Activated CD8-positive, alpha-beta T cell treated with anti-CD3 and anti-CD28 coated beads for 36 hours (primary cell): ENCODE measurements at regions of chr12 and their contacts with region 1.

Region 1: DNA sequence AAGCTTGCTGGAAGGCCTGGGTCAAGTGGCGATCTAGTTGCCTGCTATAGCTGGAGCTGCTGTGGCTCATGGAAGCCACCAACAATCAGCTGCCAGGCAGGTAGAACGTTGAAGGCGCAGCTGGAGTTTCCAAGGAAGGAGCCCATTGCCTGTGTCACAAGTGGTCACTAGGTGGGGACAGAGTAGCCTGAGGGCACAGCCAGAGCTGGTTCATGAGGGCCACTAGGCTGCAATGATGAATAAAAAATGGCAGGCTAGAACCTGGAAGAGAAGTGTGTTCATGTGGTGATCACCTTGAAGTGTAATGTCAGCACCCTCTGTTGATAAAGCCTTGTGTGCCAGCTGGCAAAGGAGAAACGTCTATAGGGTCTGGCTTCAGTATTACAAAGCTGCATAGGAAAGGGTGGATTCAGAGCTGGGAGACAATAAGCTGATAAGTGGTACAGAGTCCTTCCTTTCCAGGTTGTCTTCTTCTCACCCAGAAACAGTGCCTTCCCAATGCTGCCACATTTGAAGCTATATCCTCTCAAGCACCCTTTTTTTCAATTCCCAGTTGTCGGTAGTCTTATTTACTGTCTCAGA is 165.8 kb downstream of the EMP1 start:
- DNase-seq: peak; percentile 74
- ATAC-seq: peak; percentile 90
- H3K4me3 Mint-ChIP-seq: no peak overlapping the region
- H3K27ac Mint-ChIP-seq: no peak overlapping the region
- H3K4me1 Mint-ChIP-seq: no peaks in the 10 kb centered on the region
- H3K27me3 Mint-ChIP-seq: peaks cover 14% of the 10 kb centered on the region
- CTCF ChIP-seq: peak; percentile 76

Region 2: GRCh38 chr12:13304924-13305323 is 57.4 kb before region 1 on chr12:
- CTCF ChIA-PET with region 1: interaction called, 10 read pairs
- POLR2A ChIA-PET with region 1: no interaction called
- intact Hi-C with region 1: no loop called
- DNase-seq: no peak
- ATAC-seq: no peak
- H3K4me3 Mint-ChIP-seq: no peak overlapping the region
- H3K27ac Mint-ChIP-seq: no peak overlapping the region
- H3K4me1 Mint-ChIP-seq: no peaks in the 10 kb centered on the region
- H3K27me3 Mint-ChIP-seq: peaks cover 22% of the 10 kb centered on the region
- CTCF ChIP-seq: no peak

Region 3: GRCh38 chr12:13347241-13348043 is 14.9 kb before region 1 on chr12:
- CTCF ChIA-PET with region 1: interaction called, 25 read pairs
- POLR2A ChIA-PET with region 1: no interaction called
- intact Hi-C with region 1: no loop called
- DNase-seq: peak; percentile 77
- ATAC-seq: peak; percentile 93
- H3K4me3 Mint-ChIP-seq: no peak overlapping the region
- H3K27ac Mint-ChIP-seq: peak overlapping the region; percentile 25
- H3K4me1 Mint-ChIP-seq: peaks cover 13% of the 10 kb centered on the region
- H3K27me3 Mint-ChIP-seq: peaks cover 36% of the 10 kb centered on the region
- CTCF ChIP-seq: no peak

Region 4: DNA sequence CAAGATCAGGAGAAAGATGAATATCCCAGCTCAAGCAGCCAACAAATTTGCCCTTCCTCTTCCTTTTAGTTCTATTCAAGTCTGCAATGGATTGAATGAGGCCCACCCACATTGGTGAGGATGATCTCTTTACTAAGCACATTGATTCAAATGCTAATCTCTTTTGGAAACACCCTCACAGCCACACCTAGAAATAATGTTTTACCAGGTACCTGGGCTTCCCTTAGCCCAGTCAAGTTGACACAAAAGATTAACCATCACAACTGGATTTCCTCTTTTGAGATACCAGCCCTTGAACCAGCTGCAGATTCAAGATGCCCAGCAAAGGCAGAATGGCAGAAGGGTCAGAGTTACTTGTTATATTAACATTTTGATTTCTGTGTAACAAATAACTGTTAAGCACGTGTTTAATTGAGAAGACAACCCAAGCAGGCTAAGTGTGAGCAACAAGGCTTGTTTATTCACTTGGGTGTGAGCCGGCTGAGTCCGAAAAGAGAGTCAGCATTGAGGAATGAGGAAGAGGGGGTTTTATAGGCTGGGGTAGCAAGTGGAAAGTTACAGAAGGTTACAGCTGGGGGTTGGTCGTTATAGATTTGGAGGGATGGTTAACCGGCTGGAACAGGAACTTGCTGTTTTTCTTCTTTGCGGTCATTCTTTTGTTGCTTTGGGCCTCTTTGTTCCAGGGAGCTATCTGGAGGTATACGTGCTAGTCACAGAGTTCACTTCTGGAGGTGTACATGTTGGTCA is 14.4 kb after region 1 on chr12:
- CTCF ChIA-PET with region 1: interaction called, 18 read pairs
- POLR2A ChIA-PET with region 1: no interaction called
- intact Hi-C with region 1: no loop called
- DNase-seq: no peak
- ATAC-seq: no peak
- H3K4me3 Mint-ChIP-seq: no peak overlapping the region
- H3K27ac Mint-ChIP-seq: no peak overlapping the region
- H3K4me1 Mint-ChIP-seq: no peaks in the 10 kb centered on the region
- H3K27me3 Mint-ChIP-seq: peaks cover 5% of the 10 kb centered on the region
- CTCF ChIP-seq: no peak

Region 5: GRCh38 chr12:13661005-13661887 is 298.9 kb after region 1 on chr12:
- CTCF ChIA-PET with region 1: interaction called, 10 read pairs
- POLR2A ChIA-PET with region 1: no interaction called
- intact Hi-C with region 1: no loop called
- DNase-seq: peak; percentile 35
- ATAC-seq: no peak
- H3K4me3 Mint-ChIP-seq: no peak overlapping the region
- H3K27ac Mint-ChIP-seq: no peak overlapping the region
- H3K4me1 Mint-ChIP-seq: no peaks in the 10 kb centered on the region
- H3K27me3 Mint-ChIP-seq: peaks cover 2% of the 10 kb centered on the region
- CTCF ChIP-seq: peak; percentile 72

Region 6: GRCh38 chr12:14167005-14167628 is 804.8 kb after region 1 on chr12:
- CTCF ChIA-PET with region 1: interaction called, 13 read pairs
- POLR2A ChIA-PET with region 1: no interaction called
- intact Hi-C with region 1: no loop called
- DNase-seq: peak; percentile 48
- ATAC-seq: no peak
- H3K4me3 Mint-ChIP-seq: no peak overlapping the region
- H3K27ac Mint-ChIP-seq: no peak overlapping the region
- H3K4me1 Mint-ChIP-seq: peaks cover 3% of the 10 kb centered on the region
- H3K27me3 Mint-ChIP-seq: peaks cover 4% of the 10 kb centered on the region
- CTCF ChIP-seq: peak; percentile 98